IMR-90 (cell line): ENCODE measurements at regions of chr2 and their contacts with region 1.

Region 1: GRCh38 chr2:227479865-227480475 is 8.0 kb downstream of the AGFG1 start:
- DNase-seq: peak; percentile 58
- ATAC-seq: peak; percentile 86
- H3K4me3 ChIP-seq: no peak overlapping the region
- H3K27ac ChIP-seq: no peak overlapping the region; the same call in 1 of the 2 replicates
- H3K4me1 ChIP-seq: peaks cover 5% of the 10 kb centered on the region
- H3K27me3 ChIP-seq: no peaks in the 10 kb centered on the region
- CTCF ChIP-seq: peak; percentile 56
- POLR2A ChIP-seq: no peak
- RAD21 ChIP-seq: peak; percentile 63

Region 2: DNA sequence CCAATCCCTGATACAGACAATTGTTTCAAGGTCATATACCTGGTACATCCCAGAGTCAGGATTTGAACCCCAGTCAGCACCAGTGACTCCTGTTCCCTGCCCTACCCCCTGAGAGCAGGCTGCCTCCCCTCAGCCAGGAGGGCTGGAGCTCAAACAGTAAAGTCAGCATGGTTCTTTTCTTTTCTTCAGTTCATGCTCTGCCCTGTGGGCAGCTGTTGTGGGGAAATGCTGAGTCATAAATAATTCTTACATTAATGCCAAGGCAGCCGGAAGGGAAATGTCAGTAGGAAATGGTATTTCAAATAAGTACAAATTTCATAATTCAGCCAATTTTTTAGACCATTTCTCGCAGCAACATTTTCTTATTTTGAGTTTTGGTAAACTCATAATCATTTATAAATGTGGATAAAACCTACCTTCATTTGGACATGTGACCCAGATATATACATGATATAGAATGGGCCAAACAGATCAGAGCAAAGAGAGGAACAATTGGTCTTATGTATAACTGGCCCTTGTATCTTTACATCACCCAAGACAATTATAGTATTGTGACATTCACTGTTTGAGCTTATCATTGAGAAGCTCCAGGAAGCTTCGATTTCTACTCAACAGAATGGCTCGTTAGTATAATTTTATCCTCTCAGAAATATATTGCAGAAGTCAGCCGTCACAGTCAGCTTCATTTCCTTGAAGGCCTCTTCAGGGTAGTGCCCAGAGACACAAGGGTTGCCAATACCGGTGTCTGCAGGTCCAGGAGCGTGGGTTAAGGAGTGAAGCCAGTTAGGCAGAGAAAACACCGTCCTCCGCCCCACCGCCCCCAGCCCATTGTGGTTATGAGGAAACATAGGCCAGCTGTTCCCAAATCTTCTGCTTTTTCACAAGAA is 64.2 kb before region 1 on chr2:
- CTCF ChIA-PET with region 1: no interaction called
- POLR2A ChIA-PET with region 1: no interaction called
- dilution Hi-C with region 1: no loop called
- in situ Hi-C with region 1: no loop called
- intact Hi-C with region 1: no loop called
- DNase-seq: peak; percentile 69
- ATAC-seq: peak; percentile 70
- H3K4me3 ChIP-seq: no peak overlapping the region
- H3K27ac ChIP-seq: peak overlapping the region; percentile 95
- H3K4me1 ChIP-seq: peaks cover 4% of the 10 kb centered on the region
- H3K27me3 ChIP-seq: no peaks in the 10 kb centered on the region
- CTCF ChIP-seq: no peak
- POLR2A ChIP-seq: no peak
- RAD21 ChIP-seq: no peak

Region 3: GRCh38 chr2:227509824-227510619 is 30.1 kb after region 1 on chr2:
- CTCF ChIA-PET with region 1: interaction called, 5 read pairs
- POLR2A ChIA-PET with region 1: no interaction called
- dilution Hi-C with region 1: no loop called
- in situ Hi-C with region 1: loop called (anchors 5 kb)
- intact Hi-C with region 1: loop called (anchors 2 kb)
- DNase-seq: peak; percentile 51
- ATAC-seq: peak; percentile 47
- H3K4me3 ChIP-seq: no peak overlapping the region
- H3K27ac ChIP-seq: no peak overlapping the region
- H3K4me1 ChIP-seq: peaks cover 7% of the 10 kb centered on the region
- H3K27me3 ChIP-seq: no peaks in the 10 kb centered on the region
- CTCF ChIP-seq: no peak
- POLR2A ChIP-seq: no peak
- RAD21 ChIP-seq: no peak

Region 4: GRCh38 chr2:227515742-227516141 is 35.8 kb after region 1 on chr2:
- CTCF ChIA-PET with region 1: no interaction called
- POLR2A ChIA-PET with region 1: no interaction called
- dilution Hi-C with region 1: no loop called
- in situ Hi-C with region 1: loop called (anchors 5 kb)
- intact Hi-C with region 1: loop called (anchors 2 kb)
- DNase-seq: no peak
- ATAC-seq: no peak
- H3K4me3 ChIP-seq: no peak overlapping the region
- H3K27ac ChIP-seq: no peak overlapping the region
- H3K4me1 ChIP-seq: peaks cover 25% of the 10 kb centered on the region
- H3K27me3 ChIP-seq: no peaks in the 10 kb centered on the region
- CTCF ChIP-seq: no peak
- POLR2A ChIP-seq: no peak
- RAD21 ChIP-seq: no peak

Region 5: GRCh38 chr2:227655454-227655853 is 175.5 kb after region 1 on chr2:
- CTCF ChIA-PET with region 1: no interaction called
- POLR2A ChIA-PET with region 1: no interaction called
- dilution Hi-C with region 1: no loop called
- in situ Hi-C with region 1: no loop called
- intact Hi-C with region 1: loop called (anchors 2 kb)
- DNase-seq: peak; percentile 91
- ATAC-seq: peak; percentile 81
- H3K4me3 ChIP-seq: no peak overlapping the region
- H3K27ac ChIP-seq: no peak overlapping the region
- H3K4me1 ChIP-seq: no peaks in the 10 kb centered on the region
- H3K27me3 ChIP-seq: no peaks in the 10 kb centered on the region
- CTCF ChIP-seq: no peak
- POLR2A ChIP-seq: no peak
- RAD21 ChIP-seq: no peak

Region 6: GRCh38 chr2:228516019-228516418 is 1036.0 kb after region 1 on chr2:
- CTCF ChIA-PET with region 1: no interaction called
- POLR2A ChIA-PET with region 1: no interaction called
- dilution Hi-C with region 1: no loop called
- in situ Hi-C with region 1: no loop called
- intact Hi-C with region 1: no loop called
- DNase-seq: no peak
- ATAC-seq: no peak
- H3K4me3 ChIP-seq: no peak overlapping the region
- H3K27ac ChIP-seq: no peak overlapping the region
- H3K4me1 ChIP-seq: no peaks in the 10 kb centered on the region
- H3K27me3 ChIP-seq: no peaks in the 10 kb centered on the region
- CTCF ChIP-seq: no peak
- POLR2A ChIP-seq: no peak
- RAD21 ChIP-seq: no peak